ENCODE measurements at regions of chr7 and their contacts with region 1.

Region 1: DNA sequence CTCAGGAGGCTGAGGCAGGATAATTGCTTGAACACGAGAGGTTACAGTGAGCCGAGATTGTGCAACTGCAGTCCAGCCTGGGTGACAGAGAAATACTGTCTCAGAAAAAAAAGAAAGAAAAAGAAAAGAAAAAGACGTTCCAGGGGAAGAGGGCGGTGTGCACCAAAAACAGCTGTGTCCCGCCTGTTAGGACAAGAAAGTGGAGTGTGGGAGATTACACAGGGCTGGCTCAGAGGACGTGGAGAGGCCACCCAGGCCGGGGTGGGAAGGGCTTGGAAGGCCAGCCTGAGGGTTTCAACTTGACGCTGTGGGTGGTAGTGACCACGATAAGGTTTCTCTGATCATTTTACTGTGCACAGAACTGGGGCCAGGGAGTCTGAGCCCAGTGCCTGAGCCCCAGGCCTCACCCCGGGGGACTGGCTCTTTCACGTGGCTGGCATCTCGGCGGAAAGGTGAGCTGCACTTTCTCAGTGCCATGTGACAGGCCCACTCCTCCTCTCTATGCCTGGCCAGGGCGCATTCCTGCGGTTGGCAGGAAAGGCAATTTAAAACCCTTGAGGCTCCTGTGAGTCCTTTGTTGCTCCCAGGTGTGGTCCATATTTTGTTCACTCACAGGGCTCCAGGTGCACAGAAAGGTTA is 13.9 kb downstream of the RHBDD2 start:
- DNase-seq: no peak

Region 2: GRCh38 chr7:75798770-75799169 is 94.0 kb before region 1 on chr7:
- CTCF ChIA-PET with region 1: interaction called, 11 read pairs
- POLR2A ChIA-PET with region 1: no interaction called
- DNase-seq: no peak

Region 3: DNA sequence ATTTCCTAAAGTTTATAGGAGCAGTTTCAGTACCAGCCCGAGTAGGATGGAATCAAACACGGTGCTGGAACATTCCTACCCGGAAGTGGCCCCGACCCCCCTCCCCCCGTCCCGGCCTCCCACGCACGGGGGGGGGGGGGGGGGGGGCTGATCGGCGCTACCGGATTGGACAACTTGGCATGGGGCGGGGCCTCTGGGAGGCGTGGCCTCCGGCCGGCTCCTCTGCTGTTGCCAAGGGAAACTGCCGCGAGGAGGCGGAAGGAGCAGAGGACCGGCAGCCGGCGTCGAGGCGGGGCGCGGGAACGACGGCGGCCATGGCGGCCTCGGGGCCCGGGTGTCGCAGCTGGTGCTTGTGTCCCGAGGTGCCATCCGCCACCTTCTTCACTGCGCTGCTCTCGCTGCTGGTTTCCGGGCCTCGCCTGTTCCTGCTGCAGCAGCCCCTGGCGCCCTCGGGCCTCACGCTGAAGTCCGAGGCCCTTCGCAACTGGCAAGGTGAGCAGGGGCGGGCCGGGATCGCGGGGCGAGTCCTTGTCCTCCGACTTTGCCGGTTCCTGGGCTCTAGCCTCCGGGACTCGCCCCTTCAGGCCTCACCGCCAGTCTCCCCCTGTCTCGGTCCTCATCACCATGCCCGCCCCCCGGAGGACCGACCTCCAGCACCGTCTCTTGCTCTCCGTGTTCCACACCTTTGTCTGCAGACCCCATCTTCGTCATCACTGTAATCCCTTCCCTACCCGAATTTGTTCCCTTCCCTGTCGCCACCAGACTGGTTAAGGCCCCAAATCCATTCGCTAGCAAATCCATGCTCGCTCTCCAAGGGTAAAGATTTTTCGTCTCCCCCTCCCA is 13.8 kb before region 1 on chr7 and contains the start of gene RHBDD2:
- CTCF ChIA-PET with region 1: no interaction called
- POLR2A ChIA-PET with region 1: no interaction called
- DNase-seq: peak; percentile 98

Region 4: DNA sequence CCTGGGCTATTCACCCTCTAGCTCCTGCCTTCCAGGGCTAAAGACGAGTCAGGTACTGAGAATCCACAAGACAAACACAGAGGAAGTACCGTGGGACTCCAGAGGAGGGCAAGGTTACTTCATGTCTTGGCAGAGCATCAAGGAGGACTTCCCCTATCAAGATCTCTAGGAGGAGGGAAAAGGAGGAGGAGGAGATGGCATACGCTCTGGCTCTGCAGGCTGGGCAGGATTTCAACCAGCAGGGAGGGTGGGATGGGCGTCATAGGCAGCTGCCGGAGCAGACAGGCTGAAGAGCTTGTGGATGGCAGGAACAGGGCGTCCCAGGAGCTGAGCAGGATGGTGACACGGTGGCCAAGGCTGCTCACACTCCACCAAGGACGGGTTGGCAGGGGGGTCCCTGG is 176.5 kb after region 1 on chr7:
- CTCF ChIA-PET with region 1: no interaction called
- POLR2A ChIA-PET with region 1: no interaction called
- DNase-seq: peak; percentile 20

Region 5: DNA sequence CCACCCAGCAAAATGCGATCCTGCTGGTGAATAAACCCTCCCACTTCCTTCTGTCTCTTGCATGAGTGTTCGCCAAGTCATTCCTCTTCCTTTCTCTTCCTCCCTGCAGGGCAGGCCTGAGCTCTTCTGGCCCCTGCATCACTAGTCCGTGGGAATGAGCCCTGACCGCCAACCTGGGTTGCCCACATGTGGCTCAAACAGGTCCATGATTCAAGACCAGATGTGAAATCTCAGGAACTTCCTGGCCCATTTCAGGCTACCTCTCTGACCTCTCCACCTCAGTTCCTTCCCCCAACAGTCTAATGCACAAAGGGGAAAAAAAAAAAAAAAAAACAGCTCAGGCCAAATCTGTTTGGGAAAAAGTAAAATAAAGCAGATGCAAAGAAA is 471.4 kb after region 1 on chr7:
- CTCF ChIA-PET with region 1: no interaction called
- POLR2A ChIA-PET with region 1: no interaction called
- DNase-seq: no peak

Measured in HEK293T (cell line).